ENCODE measurements at regions of chr10 and their contacts with region 1.

Region 1: DNA sequence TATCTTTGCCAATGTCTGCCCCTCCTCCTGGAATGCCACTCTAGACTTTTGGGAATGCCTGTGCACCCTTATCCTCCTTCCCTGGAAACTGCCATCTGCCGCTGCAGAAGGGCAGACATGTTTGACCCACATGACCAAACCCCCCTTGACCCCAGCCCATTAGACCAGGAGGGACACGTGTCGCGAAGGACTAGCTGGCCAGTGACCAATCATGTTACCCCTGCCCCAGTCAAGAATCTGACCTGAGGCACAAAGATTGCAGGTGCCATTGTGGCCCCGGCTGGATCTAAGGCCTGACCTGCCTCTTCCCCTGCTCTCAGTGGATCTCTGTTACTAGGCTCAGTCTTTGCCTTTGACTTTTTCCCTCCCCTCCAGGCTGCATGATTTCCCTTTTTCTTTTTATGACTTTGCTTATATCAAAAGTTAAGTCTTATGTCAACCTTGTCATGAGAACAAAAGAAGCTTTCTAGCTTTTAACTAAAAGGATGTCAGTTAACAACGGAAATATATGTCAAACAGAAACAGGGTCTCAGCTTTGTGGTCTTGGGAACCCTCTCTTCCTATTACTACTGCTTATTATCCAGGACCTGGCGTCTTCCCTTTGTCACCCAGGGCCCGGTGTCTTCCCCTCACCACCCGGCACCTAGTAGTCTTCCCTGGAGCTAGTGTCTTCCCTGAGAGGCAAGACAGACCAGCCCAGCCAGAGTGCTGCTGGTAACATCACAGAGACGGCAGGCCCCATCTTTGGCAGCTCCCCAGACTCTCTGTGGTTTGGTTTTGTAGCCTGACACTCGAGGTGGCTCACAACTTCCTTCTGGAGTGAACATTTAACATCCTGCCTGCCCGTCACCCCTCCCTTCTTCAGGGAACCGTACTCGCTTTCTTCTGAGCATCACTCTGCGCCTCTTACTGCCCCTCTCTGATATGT is 24.4 kb upstream of the PPIF start:
- DNase-seq: peak; percentile 73
- H3K4me3 Mint-ChIP-seq: no peak overlapping the region
- H3K27ac Mint-ChIP-seq: peak overlapping the region; percentile 63
- H3K4me1 Mint-ChIP-seq: peaks cover 47% of the 10 kb centered on the region
- H3K27me3 Mint-ChIP-seq: no peaks in the 10 kb centered on the region
- CTCF ChIP-seq: no peak

Region 2: DNA sequence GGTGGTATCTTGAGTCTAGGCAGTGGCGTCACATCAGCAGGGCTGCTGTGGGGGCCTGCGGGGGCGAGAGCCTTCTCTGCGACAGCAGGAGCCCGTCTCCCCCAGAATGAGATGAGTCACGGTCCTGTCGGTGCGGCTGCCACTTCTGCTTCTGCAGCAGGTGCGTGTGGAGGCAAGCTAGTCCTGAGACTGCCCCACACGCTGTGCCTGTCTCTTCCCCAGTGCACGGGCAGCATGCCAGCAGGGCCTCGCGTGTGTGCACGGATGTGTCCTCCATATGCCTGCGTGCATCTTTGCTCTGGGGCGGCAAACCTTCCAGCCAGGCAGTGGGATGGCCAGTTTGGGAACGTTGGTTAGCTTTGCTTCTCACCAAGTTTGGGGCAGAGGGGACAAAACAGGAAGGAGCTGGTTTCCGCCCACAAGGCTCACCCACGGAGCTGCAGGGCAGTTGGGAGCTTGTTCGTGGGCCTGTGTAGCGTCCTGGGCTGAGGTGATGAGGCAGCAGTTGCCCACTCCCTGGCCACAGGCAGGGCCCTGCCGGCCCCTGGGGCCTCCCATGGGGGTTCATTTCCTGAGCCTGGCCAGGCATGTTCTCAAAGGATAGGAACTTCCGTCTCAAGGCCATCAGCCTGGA is 36.4 kb before region 1 on chr10:
- CTCF ChIA-PET with region 1: no interaction called
- POLR2A ChIA-PET with region 1: no interaction called
- intact Hi-C with region 1: no loop called
- DNase-seq: no peak
- H3K4me3 Mint-ChIP-seq: no peak overlapping the region
- H3K27ac Mint-ChIP-seq: no peak overlapping the region
- H3K4me1 Mint-ChIP-seq: no peaks in the 10 kb centered on the region
- H3K27me3 Mint-ChIP-seq: no peaks in the 10 kb centered on the region
- CTCF ChIP-seq: no peak

Region 3: GRCh38 chr10:79333478-79333877 is 10.6 kb after region 1 on chr10:
- CTCF ChIA-PET with region 1: interaction called, 4 read pairs
- POLR2A ChIA-PET with region 1: interaction called, 18 read pairs
- intact Hi-C with region 1: no loop called
- DNase-seq: peak; percentile 59
- H3K4me3 Mint-ChIP-seq: no peak overlapping the region
- H3K27ac Mint-ChIP-seq: no peak overlapping the region
- H3K4me1 Mint-ChIP-seq: peaks cover 15% of the 10 kb centered on the region
- H3K27me3 Mint-ChIP-seq: no peaks in the 10 kb centered on the region
- CTCF ChIP-seq: no peak

Measured in MCF 10A (cell line).